ENCODE measurements at regions of chr12 and their contacts with region 1.

Region 1: DNA sequence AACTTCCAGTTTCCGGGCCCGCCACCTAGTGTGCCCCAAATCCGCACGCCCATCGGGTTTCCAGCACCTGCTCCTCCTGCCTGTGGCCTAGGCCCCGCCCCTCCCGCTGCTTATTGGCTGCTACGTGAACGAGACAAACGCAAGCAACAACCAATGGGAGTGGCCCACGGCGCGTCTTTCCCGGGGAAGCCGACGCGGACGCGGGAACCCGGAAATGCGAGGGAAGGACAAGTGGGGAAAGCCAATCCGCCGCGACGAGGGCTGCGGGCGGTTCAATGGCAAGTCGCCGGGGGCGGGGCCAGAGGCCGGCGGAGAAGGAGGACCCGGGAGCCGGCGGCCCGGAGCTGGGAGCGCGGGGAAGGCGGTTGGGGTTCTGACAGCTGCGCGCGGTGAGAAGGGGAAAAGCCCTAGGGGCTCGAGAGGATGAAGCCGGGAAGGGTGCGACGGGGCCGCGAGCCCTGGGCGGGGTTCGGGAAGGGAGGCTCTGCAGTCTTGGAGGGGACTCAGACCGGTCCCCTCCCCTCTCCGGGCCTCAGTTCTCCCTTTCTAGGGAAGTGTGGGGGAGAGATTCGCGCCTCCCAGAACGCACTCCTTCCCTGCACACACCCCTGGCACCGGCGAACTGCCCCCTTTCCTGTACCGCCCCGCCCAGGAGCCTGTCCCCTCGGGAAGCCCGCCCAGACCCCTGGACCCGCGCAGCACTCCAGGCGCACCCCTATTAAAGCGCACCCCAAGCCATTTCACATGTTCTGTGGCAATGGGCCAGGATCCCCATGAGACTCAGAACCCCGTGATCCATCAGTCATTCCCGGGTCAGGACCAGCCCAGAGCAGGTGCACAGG is at the start of gene FICD:
- DNase-seq: peak; percentile 96 to 99
- H3K4me3 ChIP-seq: peak within 1 kb of the TSS; percentile 80
- H3K27ac ChIP-seq: 0 out of 2 replicates have a peak within 1 kb of the TSS, but pooled peaks have one; percentile 23
- H3K4me1 ChIP-seq: peaks cover 11% of the 10 kb centered on the region; the same call in 1 of the 2 replicates
- H3K27me3 ChIP-seq: no peaks in the 10 kb centered on the region
- CTCF ChIP-seq: no peak
- total RNA-seq, gene FICD: 1.9 and 3.2 TPM in 2 replicates

Region 2: DNA sequence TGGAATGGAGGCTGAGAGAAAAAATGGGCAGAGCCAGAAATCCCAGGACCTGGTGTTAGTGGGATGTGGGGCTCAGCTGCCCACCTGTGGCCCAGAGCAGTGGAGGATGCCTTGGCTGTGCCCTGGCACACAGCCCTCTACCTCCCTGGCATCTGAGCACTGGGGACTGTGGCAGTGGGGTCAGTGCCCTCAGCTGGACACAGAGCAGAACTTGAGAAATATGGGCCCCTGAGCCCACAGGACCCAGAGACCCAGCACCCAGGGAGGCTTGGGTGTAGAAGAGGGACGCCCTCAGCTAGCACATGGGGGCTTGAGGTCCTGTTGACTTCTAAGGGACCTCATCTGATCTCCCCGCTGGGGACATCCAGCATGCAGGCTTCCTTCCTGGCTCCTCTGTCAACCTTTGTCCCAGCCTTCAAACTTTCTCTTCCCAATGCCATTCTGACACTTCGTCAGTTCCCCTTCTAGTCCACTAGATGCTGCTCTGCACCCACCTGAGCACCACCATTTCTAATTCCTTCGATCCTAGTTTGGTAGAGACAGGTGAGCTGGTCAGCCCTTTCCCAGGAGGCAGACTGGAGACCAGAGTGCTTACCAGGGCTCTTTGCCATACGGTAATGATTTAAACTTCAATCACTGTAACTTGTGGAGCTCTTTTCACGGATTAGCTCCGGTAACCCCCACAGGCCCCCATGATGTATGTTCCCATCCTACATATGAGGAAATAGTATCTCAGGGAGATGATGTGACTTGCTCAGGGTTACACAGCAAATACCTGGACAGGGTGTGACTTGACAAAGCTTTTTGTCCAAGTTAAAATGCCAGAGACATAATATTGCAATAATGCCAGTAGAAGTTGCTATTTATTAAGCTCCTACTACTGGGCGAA is 597.0 kb before region 1 on chr12:
- CTCF ChIA-PET with region 1: interaction called, 3 read pairs
- POLR2A ChIA-PET with region 1: no interaction called
- intact Hi-C with region 1: loop called (anchors 5 kb)
- DNase-seq: no peak
- H3K4me3 ChIP-seq: no peak overlapping the region
- H3K27ac ChIP-seq: no peak overlapping the region
- H3K4me1 ChIP-seq: no peaks in the 10 kb centered on the region
- H3K27me3 ChIP-seq: peaks cover 11% of the 10 kb centered on the region; the same call in 1 of the 2 replicates
- CTCF ChIP-seq: peak; percentile 73

Region 3: DNA sequence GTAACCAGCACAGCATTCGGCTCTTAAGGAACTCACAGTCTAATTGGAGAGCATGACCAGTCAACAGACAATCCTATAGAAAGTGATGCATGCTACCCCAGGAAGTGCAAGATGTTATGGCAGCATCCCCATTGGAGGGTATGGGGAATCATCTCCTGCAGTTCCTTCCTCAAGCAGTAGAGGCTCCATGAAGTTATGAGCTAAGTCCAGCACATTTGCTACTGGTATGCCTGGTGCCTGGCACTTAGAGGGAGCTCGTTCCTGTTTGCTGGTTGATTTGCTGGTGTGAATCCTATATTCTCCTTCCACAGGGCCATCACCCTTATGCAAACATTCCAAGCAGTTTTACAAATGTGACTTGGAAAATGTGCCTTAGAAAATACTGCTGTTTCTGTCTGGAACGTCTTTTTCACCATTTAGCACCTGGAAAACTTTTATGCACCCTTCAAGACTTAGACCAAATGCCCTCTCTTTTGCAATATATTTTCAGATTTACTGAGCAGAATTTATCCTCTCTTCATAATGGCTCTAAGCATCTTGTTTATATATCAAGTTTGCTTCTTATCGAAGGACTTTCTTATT is 522.2 kb before region 1 on chr12:
- CTCF ChIA-PET with region 1: interaction called, 3 read pairs
- POLR2A ChIA-PET with region 1: no interaction called
- intact Hi-C with region 1: loop called (anchors 5 kb)
- DNase-seq: no peak
- H3K4me3 ChIP-seq: no peak overlapping the region
- H3K27ac ChIP-seq: no peak overlapping the region
- H3K4me1 ChIP-seq: no peaks in the 10 kb centered on the region
- H3K27me3 ChIP-seq: no peaks in the 10 kb centered on the region
- CTCF ChIP-seq: peak; percentile 49; the same call in 1 of the 2 replicates

Region 4: GRCh38 chr12:108270035-108270848 is 245.0 kb before region 1 on chr12:
- CTCF ChIA-PET with region 1: no interaction called
- POLR2A ChIA-PET with region 1: no interaction called
- intact Hi-C with region 1: no loop called
- DNase-seq: no peak
- H3K4me3 ChIP-seq: no peak overlapping the region
- H3K27ac ChIP-seq: no peak overlapping the region
- H3K4me1 ChIP-seq: no peaks in the 10 kb centered on the region
- H3K27me3 ChIP-seq: no peaks in the 10 kb centered on the region
- CTCF ChIP-seq: no peak

Region 5: DNA sequence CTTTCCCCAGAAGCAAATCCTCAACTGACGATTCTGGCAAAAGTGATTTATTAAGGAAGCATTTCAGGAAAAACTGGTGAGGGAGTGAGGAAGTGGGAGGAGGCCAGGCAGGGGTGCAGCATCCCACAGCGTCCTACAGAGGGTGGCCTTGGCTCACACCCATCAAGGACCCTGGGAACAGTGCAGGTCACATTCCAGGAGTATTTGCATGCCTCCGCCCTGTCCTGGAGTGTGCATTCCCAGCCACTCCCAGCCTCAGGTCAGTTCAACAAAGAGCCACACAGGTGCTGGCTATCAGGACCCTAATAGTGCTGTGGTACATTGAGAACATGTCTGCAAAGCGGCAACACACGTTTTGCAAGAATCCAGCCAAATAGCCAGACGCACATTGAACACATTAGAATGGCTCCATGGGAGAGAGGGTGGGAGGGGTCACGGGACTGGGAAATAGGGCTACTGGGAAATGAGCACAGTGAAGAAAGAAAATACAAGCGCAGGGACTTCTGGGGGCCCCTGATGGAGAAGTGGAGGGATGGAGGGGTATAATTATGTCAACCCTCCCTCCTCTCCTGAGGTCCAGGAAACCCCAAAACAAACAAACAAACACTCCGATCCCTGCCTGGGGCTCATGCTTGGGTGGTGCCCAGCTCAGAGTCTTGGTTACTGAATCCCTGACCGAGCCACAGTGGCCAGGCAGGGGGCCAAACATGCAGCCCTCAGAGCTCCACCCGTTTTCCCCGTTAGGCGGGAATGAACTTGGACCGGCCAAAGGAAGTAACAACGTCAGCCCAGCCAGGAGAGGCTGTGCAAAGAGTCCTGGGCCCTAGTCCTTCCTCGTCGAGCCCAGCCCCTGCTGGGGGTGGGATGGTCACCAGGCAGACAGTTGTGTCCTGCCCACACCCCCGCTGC is 212.5 kb before region 1 on chr12:
- CTCF ChIA-PET with region 1: no interaction called
- POLR2A ChIA-PET with region 1: no interaction called
- intact Hi-C with region 1: loop called (anchors 1 kb)
- DNase-seq: peak; percentile 44 to 64
- H3K4me3 ChIP-seq: no peak overlapping the region
- H3K27ac ChIP-seq: no peak overlapping the region
- H3K4me1 ChIP-seq: no peaks in the 10 kb centered on the region
- H3K27me3 ChIP-seq: peaks cover 82% of the 10 kb centered on the region
- CTCF ChIP-seq: no peak

Region 6: DNA sequence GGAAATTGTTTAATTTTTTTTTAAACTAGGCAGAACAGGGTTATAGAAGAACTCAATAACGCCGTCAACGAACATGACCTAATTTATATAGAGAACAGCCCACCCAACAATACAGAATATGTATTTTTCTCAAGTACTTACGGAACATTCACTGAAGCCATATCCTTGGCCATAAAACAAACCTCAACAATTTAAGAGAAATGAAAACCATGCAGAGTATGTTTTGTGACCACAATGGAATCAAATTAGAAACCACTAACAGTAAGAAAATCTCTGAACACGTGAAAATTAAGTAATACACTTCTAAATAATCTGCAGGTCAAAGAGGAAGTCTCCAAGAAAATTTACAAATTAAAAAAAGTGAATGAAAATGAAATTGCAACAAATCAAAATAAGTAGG is 36.3 kb after region 1 on chr12:
- CTCF ChIA-PET with region 1: interaction called, 14 read pairs
- POLR2A ChIA-PET with region 1: no interaction called
- intact Hi-C with region 1: no loop called
- DNase-seq: no peak
- H3K4me3 ChIP-seq: no peak overlapping the region
- H3K27ac ChIP-seq: no peak overlapping the region
- H3K4me1 ChIP-seq: no peaks in the 10 kb centered on the region
- H3K27me3 ChIP-seq: no peaks in the 10 kb centered on the region
- CTCF ChIP-seq: no peak

Region 7: DNA sequence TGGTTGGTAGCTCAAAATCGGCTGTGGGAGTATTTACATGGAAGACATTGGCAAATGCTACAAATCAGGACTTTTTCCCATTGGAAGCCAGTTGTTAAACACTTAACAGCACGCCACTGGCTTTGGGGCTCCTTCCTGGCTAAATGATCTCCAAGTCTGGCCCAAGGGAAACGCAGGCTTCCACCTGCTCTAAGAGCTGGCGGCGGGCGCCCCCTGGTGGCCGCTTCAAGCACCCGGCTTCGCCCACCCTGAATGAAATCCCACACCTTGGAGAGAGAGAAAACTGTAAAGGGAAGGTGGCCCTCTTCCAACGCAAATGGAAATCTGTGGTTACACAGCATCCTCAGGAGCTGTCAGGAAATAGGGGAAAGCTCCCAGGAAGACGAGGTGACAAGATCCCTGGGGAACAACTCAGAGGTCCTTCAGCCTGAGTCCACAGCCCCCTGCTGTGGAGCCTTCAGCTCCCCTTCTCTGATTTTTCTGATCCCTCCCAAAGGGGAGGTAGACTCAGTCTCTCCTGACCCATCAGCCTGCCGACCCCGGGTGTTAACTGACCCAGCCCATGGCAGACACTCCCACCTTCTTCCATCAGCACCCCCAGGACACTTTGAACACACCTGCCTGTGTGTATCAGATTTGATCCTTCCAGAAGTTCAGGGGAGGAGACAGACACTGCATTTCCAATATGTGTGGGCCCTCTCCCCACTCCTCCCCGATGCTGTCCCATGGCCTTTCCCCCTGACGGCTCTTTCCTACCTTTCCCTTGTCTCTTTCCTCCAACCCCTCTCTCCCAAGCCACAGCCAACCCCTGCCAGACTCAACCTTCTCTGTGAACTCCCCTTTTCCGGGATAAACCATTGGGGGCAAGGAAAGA is 103.1 kb after region 1 on chr12:
- CTCF ChIA-PET with region 1: no interaction called
- POLR2A ChIA-PET with region 1: no interaction called
- intact Hi-C with region 1: loop called (anchors 10 kb)
- DNase-seq: peak; percentile 58 to 77
- H3K4me3 ChIP-seq: no peak overlapping the region
- H3K27ac ChIP-seq: no peak overlapping the region
- H3K4me1 ChIP-seq: peaks cover 16% of the 10 kb centered on the region
- H3K27me3 ChIP-seq: no peaks in the 10 kb centered on the region
- CTCF ChIP-seq: peak; percentile 98

Measured in PC-9 (cell line).